Cardiac septum (tissue), 1 donor: ENCODE measurements at regions of chr5 and their contacts with region 1.

Region 1: DNA sequence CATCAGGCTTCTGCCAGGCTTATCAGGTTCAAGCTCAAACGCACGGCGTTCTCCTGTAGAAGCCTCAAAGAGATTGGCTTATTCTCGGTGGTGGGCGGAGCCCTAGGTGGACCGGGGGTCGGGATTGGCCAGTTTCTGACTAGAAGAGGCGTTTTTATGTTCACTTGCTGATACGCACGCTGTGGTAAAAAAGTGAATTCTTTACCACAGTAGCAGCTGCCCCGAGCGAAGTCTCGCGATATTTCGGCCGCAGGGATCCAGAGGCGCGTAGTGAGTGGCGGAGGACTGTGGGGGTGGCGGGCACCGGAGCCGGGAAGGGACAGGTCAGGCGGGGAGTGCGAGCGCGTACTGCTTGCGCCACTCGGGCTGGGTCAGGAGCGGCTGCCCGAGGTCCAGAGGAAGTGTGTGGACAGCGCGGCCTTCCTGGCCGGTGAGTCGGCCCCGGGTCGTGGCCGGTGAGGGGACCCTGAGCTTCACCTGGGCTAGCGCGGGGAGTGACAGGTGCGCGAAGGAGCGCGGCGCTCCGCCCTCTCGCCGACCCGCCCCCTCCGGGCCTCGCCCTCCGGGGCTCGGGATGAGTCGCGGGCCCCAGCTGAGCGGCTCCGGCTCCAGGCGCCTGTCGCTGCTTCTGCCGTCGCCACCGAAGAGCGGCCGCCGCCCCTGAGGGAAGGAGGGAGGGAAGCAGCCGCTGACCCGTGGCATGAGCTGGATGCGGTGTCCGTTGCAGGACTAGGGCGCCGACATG is at the start of gene DMXL1:
- DNase-seq: peak; percentile 99
- total RNA-seq, gene DMXL1: 28.2 TPM

Region 2: GRCh38 chr5:118987988-118988865 is 82.8 kb before region 1 on chr5 and contains the start of gene DTWD2:
- intact Hi-C with region 1: loop called (anchors 5 kb)
- DNase-seq: peak; percentile 97
- total RNA-seq, gene DTWD2: 10.1 TPM

Region 3: GRCh38 chr5:119267958-119268386 is 197.0 kb after region 1 on chr5:
- intact Hi-C with region 1: loop called (anchors 2 kb)
- DNase-seq: peak; percentile 91

Region 4: GRCh38 chr5:119452373-119453039 is 381.5 kb after region 1 on chr5 and contains the start of gene HSD17B4:
- intact Hi-C with region 1: loop called (anchors 5 kb)
- DNase-seq: peak; percentile 96
- total RNA-seq, gene HSD17B4: 189 TPM